ENCODE measurements at regions of chr1 and their contacts with region 1.

Region 1: DNA sequence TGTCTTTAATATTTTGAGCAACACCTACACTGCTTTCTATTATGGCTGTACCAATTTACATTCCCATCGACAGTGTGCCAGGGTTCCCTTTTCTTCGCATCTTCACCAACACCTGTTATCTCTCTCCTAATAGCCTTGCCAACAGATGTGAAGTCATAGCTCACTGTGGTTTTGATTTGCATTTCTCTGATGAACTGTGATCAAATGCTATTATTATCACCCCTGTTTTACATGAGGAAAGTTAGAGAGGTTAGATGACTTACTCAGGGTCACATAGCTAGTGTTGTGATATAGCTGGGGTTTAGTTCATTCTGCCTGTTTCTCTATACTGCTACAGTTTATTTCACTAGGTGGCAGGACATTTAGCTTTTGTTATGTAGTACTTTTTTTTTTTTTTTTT is 204.1 kb downstream of the FMN2 start:
- DNase-seq: no peak
- H3K4me3 ChIP-seq: no peak overlapping the region
- H3K27ac ChIP-seq: no peak overlapping the region
- H3K27me3 ChIP-seq: no peaks in the 10 kb centered on the region
- CTCF ChIP-seq: no peak

Region 2: GRCh38 chr1:239566074-239566473 is 729.7 kb before region 1 on chr1:
- CTCF ChIA-PET with region 1: no interaction called
- POLR2A ChIA-PET with region 1: no interaction called
- DNase-seq: no peak
- H3K4me3 ChIP-seq: no peak overlapping the region
- H3K27ac ChIP-seq: no peak overlapping the region
- H3K27me3 ChIP-seq: no peaks in the 10 kb centered on the region
- CTCF ChIP-seq: no peak

Region 3: GRCh38 chr1:240149484-240150094 is 146.2 kb before region 1 on chr1:
- CTCF ChIA-PET with region 1: no interaction called
- POLR2A ChIA-PET with region 1: no interaction called
- DNase-seq: no peak
- H3K4me3 ChIP-seq: no peak overlapping the region
- H3K27ac ChIP-seq: no peak overlapping the region
- H3K27me3 ChIP-seq: no peaks in the 10 kb centered on the region
- CTCF ChIP-seq: peak; percentile 72

Region 4: DNA sequence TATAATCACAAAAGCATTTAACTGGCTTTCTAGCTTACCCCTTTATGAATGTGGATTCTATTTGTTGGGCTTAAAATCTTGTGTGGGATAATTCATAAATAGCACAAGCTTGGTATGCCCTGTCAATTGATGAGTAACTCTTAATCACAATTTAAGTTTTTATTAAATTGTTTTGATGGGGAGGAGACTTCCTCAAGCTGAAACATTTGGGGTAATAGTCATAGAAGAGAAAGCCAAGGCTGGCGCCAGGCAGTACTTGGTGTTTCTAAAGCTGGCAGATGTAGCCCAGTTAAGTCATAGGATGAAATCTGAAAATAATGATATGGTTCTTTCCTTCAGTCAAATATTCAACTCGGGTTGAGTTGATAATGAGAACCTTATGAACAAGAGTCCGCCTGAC is 36.9 kb before region 1 on chr1:
- CTCF ChIA-PET with region 1: interaction called, 3 read pairs
- POLR2A ChIA-PET with region 1: interaction called, 16 read pairs
- DNase-seq: peak; percentile 61
- H3K4me3 ChIP-seq: no peak overlapping the region
- H3K27ac ChIP-seq: no peak overlapping the region
- H3K27me3 ChIP-seq: no peaks in the 10 kb centered on the region
- CTCF ChIP-seq: no peak

Measured in AG04450 (cell line).